CD4-positive, alpha-beta T cell (primary cell): ENCODE measurements at regions of chr7 and their contacts with region 1.

Region 1: GRCh38 chr7:129439963-129440625 is 5.9 kb downstream of the STRIP2 start:
- DNase-seq: no peak
- ATAC-seq: no peak
- H3K4me3 ChIP-seq: no peak overlapping the region
- H3K4me3 Mint-ChIP-seq: no peak overlapping the region
- H3K27ac ChIP-seq: no peak overlapping the region
- H3K27ac Mint-ChIP-seq: no peak overlapping the region
- H3K4me1 ChIP-seq: peaks cover 3% of the 10 kb centered on the region
- H3K4me1 Mint-ChIP-seq: peaks cover 5% of the 10 kb centered on the region
- H3K27me3 ChIP-seq: peaks cover 11 to 22% of the 10 kb centered on the region in 2 experiments
- H3K27me3 Mint-ChIP-seq: peaks cover 22% of the 10 kb centered on the region
- CTCF ChIP-seq: no peak

Region 2: GRCh38 chr7:129427526-129428045 is 12.5 kb before region 1 on chr7:
- CTCF ChIA-PET with region 1: no interaction called
- POLR2A ChIA-PET with region 1: no interaction called
- intact Hi-C with region 1: loop called in 1 of 2 experiments (anchors 2 kb)
- DNase-seq: no peak
- ATAC-seq: no peak
- H3K4me3 ChIP-seq: no peak overlapping the region
- H3K4me3 Mint-ChIP-seq: no peak overlapping the region
- H3K27ac ChIP-seq: no peak overlapping the region
- H3K27ac Mint-ChIP-seq: no peak overlapping the region
- H3K4me1 ChIP-seq: no peaks in the 10 kb centered on the region
- H3K4me1 Mint-ChIP-seq: peaks cover 13% of the 10 kb centered on the region
- H3K27me3 ChIP-seq: peaks cover 0 to 1% of the 10 kb centered on the region in 2 experiments
- H3K27me3 Mint-ChIP-seq: peaks cover 2% of the 10 kb centered on the region
- CTCF ChIP-seq: no peak